ENCODE measurements at regions of chr2 and their contacts with region 1.

Region 1: GRCh38 chr2:70070541-70071268 is 16.6 kb upstream of the PCBP1 start:
- DNase-seq: peak; percentile 75 to 81 (median 79)
- H3K4me3 ChIP-seq: peak overlapping the region in 1 of 2 donors; percentile 1
- H3K4me3 Mint-ChIP-seq: peak overlapping the region; percentile 67 to 91 (median 80)
- H3K27ac ChIP-seq: peak overlapping the region; percentile 82
- H3K27ac Mint-ChIP-seq: peak overlapping the region; percentile 81 to 99 (median 98)
- H3K4me1 ChIP-seq: peaks cover 39% of the 10 kb centered on the region
- H3K4me1 Mint-ChIP-seq: peaks cover 36 to 55% (median 46%) of the 10 kb centered on the region in 4 donors
- H3K27me3 ChIP-seq: no peaks in the 10 kb centered on the region
- H3K27me3 Mint-ChIP-seq: no peaks in the 10 kb centered on the region

Region 2: DNA sequence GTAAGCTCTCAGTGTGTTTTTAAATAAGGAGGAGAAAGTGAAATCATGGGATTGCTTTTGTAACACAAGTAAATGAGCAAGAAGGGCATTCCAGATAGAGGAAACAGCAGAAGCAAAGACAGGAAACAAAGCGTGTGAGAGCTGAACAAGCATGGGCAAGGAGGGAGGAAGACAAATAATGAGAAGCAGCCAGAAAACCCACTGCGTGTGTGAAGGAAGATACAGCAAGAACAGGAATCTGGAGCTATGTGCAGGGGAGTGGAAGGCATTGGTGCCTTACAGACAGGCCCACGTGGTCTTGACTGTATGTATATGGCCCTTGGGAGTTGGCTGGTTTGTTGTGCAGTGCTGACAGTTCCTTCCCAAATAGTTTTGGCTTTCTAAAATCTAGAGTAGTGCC is 515.7 kb before region 1 on chr2:
- CTCF ChIA-PET with region 1: no interaction called
- POLR2A ChIA-PET with region 1: no interaction called
- intact Hi-C with region 1: no loop called
- DNase-seq: no peak
- H3K4me3 ChIP-seq: no peak overlapping the region
- H3K4me3 Mint-ChIP-seq: peak overlapping the region in 6 of 8 donors; percentile 0 to 75 (median 34)
- H3K27ac ChIP-seq: no peak overlapping the region
- H3K27ac Mint-ChIP-seq: peak overlapping the region; percentile 17 to 68 (median 38)
- H3K4me1 ChIP-seq: peaks cover 55% of the 10 kb centered on the region
- H3K4me1 Mint-ChIP-seq: peaks cover 48 to 85% (median 67%) of the 10 kb centered on the region in 4 donors
- H3K27me3 ChIP-seq: no peaks in the 10 kb centered on the region
- H3K27me3 Mint-ChIP-seq: no peaks in the 10 kb centered on the region

Region 3: DNA sequence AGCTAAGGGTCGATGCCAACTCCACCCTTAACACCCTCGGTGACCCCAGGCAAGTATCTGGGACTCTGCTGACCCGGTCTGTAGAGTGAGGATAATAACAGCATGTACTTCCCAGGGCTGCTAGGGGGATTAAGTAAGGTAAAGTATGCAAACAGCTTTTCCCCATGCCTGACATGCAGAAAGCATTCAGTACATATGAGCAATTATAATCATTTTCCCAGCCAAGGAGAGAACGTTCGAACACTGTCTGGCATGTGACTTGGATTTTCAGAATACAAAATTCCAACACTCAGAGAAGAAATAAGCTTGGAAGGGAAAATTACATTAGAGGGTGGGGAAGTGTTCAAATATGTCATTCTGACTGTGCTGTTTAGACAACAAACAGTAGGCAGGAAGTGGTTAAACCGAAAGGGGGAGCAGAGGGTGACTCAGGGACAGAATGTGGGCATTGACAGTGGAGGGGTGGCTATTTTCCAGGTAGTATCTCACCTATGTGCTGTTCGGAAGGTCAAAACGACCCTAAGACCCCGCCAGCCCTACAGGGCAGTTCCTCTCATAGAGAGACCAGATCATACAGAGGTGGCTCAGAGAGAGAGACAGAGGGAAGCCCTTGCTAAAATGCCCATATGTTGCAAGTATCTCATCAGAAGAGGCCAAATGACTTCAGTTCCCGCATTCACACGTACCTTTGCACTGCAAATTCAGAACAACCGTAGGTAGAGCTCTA is 124.2 kb before region 1 on chr2:
- CTCF ChIA-PET with region 1: interaction called, 8 read pairs
- POLR2A ChIA-PET with region 1: interaction called, 10 read pairs
- intact Hi-C with region 1: no loop called
- DNase-seq: peak; percentile 50 to 79 (median 64)
- H3K4me3 ChIP-seq: peak overlapping the region in 1 of 2 donors; percentile 21
- H3K4me3 Mint-ChIP-seq: peak overlapping the region in 7 of 8 donors; percentile 47 to 82 (median 64)
- H3K27ac ChIP-seq: peak overlapping the region; percentile 39
- H3K27ac Mint-ChIP-seq: peak overlapping the region; percentile 87 to 96 (median 90)
- H3K4me1 ChIP-seq: peaks cover 26% of the 10 kb centered on the region
- H3K4me1 Mint-ChIP-seq: peaks cover 24 to 36% (median 31%) of the 10 kb centered on the region in 4 donors
- H3K27me3 ChIP-seq: no peaks in the 10 kb centered on the region
- H3K27me3 Mint-ChIP-seq: no peaks in the 10 kb centered on the region

Region 4: DNA sequence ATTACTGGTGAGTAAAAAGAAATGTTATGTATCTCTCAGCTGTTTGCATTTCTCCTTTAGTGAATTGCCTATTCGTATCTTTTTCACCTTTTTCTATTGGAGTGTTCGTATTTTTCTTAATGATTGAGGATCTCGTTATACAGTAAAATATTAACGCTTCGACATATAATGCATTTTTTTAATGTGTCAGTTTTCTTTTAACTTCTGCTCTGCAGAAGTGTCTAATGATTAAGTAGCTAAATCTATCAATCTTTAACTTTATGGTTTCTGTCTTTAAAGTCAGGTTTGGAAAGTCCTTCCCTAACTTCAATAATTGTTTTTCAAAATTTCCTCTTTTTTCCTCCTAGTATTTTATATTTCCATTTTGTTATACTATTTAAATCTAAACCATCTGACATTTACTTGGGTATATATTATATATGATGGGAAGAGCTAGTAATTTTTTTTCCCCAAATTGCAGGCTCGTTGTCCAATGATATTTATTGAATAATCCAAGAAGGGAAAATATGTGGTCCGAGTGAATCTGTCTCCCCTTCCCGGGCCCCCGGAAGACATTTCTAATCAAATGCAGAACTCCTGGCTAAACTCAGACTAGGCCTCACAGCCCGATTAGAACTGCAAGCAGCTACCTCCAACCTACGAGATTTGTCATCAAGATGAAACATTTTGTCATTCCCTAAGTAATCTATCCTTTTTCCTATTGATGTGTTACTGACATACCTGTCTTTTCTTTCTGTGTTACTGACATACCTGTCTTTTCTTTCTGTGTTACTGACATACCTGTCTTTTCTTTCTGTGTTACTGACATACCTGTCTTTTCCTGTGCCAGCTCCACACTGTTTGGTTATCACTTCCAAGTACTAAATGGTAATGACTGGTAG is 33.8 kb after region 1 on chr2:
- CTCF ChIA-PET with region 1: interaction called, 4 read pairs
- POLR2A ChIA-PET with region 1: interaction called, 26 read pairs
- intact Hi-C with region 1: no loop called
- DNase-seq: peak in 2 of 5 donors; percentile 32
- H3K4me3 ChIP-seq: peak overlapping the region in 1 of 2 donors; percentile 23
- H3K4me3 Mint-ChIP-seq: peak overlapping the region; percentile 62 to 82 (median 78)
- H3K27ac ChIP-seq: peak overlapping the region; percentile 57
- H3K27ac Mint-ChIP-seq: peak overlapping the region; percentile 87 to 95 (median 94)
- H3K4me1 ChIP-seq: peaks cover 47% of the 10 kb centered on the region
- H3K4me1 Mint-ChIP-seq: peaks cover 31 to 61% (median 46%) of the 10 kb centered on the region in 4 donors
- H3K27me3 ChIP-seq: no peaks in the 10 kb centered on the region
- H3K27me3 Mint-ChIP-seq: no peaks in the 10 kb centered on the region

Region 5: DNA sequence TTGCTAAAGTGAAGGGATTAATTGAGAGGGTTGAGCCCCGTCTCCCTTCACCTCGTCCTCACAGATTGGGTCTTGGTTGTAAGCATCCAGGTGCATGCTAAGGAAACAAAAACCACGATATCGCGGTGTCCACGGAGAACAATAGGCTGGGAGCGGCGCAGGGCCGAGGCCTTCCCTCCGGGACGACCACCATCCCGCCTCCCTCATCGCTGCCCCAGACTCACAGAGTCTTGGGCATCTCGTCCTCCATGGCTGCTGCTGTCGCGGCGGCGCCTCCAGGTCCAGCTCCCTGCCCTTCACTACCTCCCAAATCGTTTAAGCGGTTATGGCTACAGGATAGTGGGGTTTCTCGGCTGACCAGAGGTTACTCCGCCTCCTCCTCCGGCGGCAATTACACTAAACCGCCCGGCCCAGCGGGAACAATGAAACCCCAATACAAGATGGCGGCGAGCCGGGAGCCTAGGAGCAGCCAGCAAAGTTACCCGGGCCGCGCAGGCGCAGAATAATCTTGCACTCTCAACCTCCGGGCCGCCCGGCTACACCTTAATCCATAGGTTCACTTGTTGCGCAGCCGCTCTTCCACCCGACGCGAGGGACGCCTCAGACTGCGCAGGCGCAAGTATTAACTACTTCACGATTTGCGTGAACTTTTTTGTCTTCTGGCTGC is 177.6 kb after region 1 on chr2 and contains the start of gene TIA1:
- CTCF ChIA-PET with region 1: no interaction called
- POLR2A ChIA-PET with region 1: interaction called, 3 read pairs
- intact Hi-C with region 1: loop called (anchors 5 kb)
- DNase-seq: peak; percentile 95 to 99 (median 98)
- H3K4me3 ChIP-seq: peak within 1 kb of the TSS; percentile 39 to 89
- H3K4me3 Mint-ChIP-seq: peak within 1 kb of the TSS; percentile 90 to 99 (median 96)
- H3K27ac ChIP-seq: peak within 1 kb of the TSS; percentile 95
- H3K27ac Mint-ChIP-seq: peak within 1 kb of the TSS; percentile 93 to 99 (median 99)
- H3K4me1 ChIP-seq: peaks cover 39% of the 10 kb centered on the region
- H3K4me1 Mint-ChIP-seq: peaks cover 26 to 54% (median 33%) of the 10 kb centered on the region in 4 donors
- H3K27me3 ChIP-seq: no peaks in the 10 kb centered on the region
- H3K27me3 Mint-ChIP-seq: peaks cover 2 to 4% of the 10 kb centered on the region in 2 donors
- total RNA-seq, gene TIA1: 200 to 208 TPM

Measured in CD4-positive, alpha-beta memory T cell (primary cell).